Activated CD4-positive, alpha-beta T cell treated with anti-CD3 and anti-CD28 coated beads for 36 hours (primary cell): ENCODE measurements at regions of chr1 and their contacts with region 1.

Region 1: GRCh38 chr1:93437976-93438605 is 9.8 kb upstream of the FNBP1L start:
- DNase-seq: no peak
- ATAC-seq: no peak
- H3K4me3 Mint-ChIP-seq: no peak overlapping the region
- H3K27ac Mint-ChIP-seq: no peak overlapping the region
- H3K4me1 Mint-ChIP-seq: no peaks in the 10 kb centered on the region
- H3K27me3 Mint-ChIP-seq: peaks cover 2% of the 10 kb centered on the region

Region 2: DNA sequence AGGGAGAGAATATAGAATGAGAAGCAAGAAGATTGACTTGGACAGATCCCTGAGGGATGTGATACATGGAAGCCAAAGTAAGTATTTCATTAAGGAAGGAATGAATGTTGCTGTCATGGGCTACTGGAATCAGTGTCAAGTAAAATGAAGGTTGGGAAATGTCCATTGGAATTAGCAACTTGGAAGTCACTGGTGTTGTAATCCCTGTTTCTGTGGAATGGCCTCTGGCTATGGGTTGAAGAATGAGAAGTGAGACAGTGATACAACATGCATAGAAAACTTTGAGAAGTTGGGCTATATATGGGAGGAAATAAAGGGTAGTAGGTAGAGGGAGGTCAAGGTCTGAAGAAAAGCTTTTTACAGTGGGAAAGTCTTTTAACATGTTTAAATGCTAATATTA is 202.8 kb before region 1 on chr1:
- CTCF ChIA-PET with region 1: no interaction called
- POLR2A ChIA-PET with region 1: no interaction called
- intact Hi-C with region 1: no loop called
- DNase-seq: no peak
- ATAC-seq: no peak
- H3K4me3 Mint-ChIP-seq: no peak overlapping the region
- H3K27ac Mint-ChIP-seq: no peak overlapping the region
- H3K4me1 Mint-ChIP-seq: no peaks in the 10 kb centered on the region
- H3K27me3 Mint-ChIP-seq: no peaks in the 10 kb centered on the region

Region 3: GRCh38 chr1:93629099-93630059 is 191.3 kb after region 1 on chr1:
- CTCF ChIA-PET with region 1: no interaction called
- POLR2A ChIA-PET with region 1: no interaction called
- intact Hi-C with region 1: loop called in 1 of 2 experiments (anchors 1 kb)
- DNase-seq: peak; percentile 56
- ATAC-seq: peak; percentile 78
- H3K4me3 Mint-ChIP-seq: no peak overlapping the region
- H3K27ac Mint-ChIP-seq: no peak overlapping the region
- H3K4me1 Mint-ChIP-seq: no peaks in the 10 kb centered on the region
- H3K27me3 Mint-ChIP-seq: no peaks in the 10 kb centered on the region

Region 4: DNA sequence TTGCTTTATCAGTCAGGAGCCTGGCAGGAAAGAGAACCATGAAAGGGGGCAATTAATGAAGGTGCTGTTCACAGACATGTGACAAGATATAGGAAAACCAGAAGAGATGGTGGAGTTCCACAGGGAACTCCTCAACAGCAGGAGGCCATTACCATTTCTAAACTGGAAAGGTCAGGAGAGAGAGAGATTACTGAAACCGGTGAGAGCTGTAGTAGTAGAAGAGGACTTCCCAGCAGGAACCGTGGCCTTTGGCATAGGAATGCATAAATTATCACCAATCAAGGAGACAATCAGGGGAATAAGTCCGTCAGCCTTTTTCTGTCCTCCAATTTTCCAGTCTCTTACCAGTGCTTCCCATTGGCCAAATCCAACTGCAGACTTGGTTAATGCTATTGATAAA is 957.1 kb after region 1 on chr1:
- CTCF ChIA-PET with region 1: no interaction called
- POLR2A ChIA-PET with region 1: no interaction called
- intact Hi-C with region 1: no loop called
- DNase-seq: no peak
- ATAC-seq: no peak
- H3K4me3 Mint-ChIP-seq: no peak overlapping the region
- H3K27ac Mint-ChIP-seq: no peak overlapping the region
- H3K4me1 Mint-ChIP-seq: no peaks in the 10 kb centered on the region
- H3K27me3 Mint-ChIP-seq: peaks cover 6% of the 10 kb centered on the region